MCF 10A (cell line): ENCODE measurements at regions of chr1 and their contacts with region 1.

Region 1: GRCh38 chr1:228664399-228664914 is 70.8 kb upstream of the RHOU start:
- DNase-seq: peak; percentile 96
- H3K4me3 Mint-ChIP-seq: no peak overlapping the region
- H3K27ac Mint-ChIP-seq: no peak overlapping the region
- H3K4me1 Mint-ChIP-seq: no peaks in the 10 kb centered on the region
- H3K27me3 Mint-ChIP-seq: no peaks in the 10 kb centered on the region
- CTCF ChIP-seq: peak; percentile 99

Region 2: DNA sequence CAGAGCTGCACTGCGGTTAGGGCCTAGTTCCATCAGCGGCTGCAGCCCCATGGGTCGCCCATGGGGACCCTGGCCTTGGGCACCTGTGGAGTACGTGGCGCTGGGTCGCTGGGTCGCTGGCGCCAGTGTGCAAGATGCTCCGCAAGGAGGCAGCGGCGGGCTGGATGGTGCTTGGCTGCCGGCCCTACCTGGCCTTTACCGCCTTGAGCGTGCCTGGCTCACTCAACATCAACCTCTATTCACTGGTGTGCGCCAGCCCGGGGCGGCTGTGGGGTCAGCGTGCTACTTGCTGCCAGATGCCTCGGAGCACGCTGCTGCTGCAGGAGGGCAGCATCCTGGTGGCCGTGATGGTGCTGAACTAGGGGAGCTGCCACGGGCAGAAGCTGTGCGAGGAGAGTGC is 14.3 kb before region 1 on chr1:
- CTCF ChIA-PET with region 1: interaction called, 40 read pairs
- POLR2A ChIA-PET with region 1: interaction called, 6 read pairs
- intact Hi-C with region 1: no loop called
- DNase-seq: no peak
- H3K4me3 Mint-ChIP-seq: no peak overlapping the region
- H3K27ac Mint-ChIP-seq: no peak overlapping the region
- H3K4me1 Mint-ChIP-seq: peaks cover 26% of the 10 kb centered on the region
- H3K27me3 Mint-ChIP-seq: no peaks in the 10 kb centered on the region
- CTCF ChIP-seq: no peak

Region 3: DNA sequence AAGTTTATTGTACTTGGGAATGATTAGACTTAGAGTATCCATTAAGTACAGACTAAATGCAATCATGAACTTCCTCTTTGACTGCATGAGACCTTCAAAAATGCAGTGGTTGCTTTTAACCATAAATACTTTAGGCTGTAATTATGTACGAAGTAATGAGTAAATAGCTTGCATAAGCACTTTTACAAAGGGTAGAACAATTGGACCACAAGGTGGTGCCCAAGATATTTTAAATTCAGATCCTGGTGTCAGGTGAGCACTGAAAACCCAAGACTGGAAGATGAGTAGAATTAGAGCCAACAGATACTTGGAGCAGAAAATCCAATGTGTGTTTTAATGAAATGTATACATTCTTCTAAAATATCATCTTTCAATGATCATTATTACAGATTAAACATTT is 27.5 kb after region 1 on chr1:
- CTCF ChIA-PET with region 1: interaction called, 16 read pairs
- POLR2A ChIA-PET with region 1: interaction called, 3 read pairs
- intact Hi-C with region 1: no loop called
- DNase-seq: peak; percentile 84
- H3K4me3 Mint-ChIP-seq: no peak overlapping the region
- H3K27ac Mint-ChIP-seq: no peak overlapping the region
- H3K4me1 Mint-ChIP-seq: peaks cover 18% of the 10 kb centered on the region
- H3K27me3 Mint-ChIP-seq: no peaks in the 10 kb centered on the region
- CTCF ChIP-seq: peak; percentile 85

Region 4: GRCh38 chr1:229156872-229157271 is 492.4 kb after region 1 on chr1:
- CTCF ChIA-PET with region 1: interaction called, 12 read pairs
- POLR2A ChIA-PET with region 1: no interaction called
- intact Hi-C with region 1: loop called (anchors 1 kb)
- DNase-seq: peak; percentile 54
- H3K4me3 Mint-ChIP-seq: no peak overlapping the region
- H3K27ac Mint-ChIP-seq: no peak overlapping the region
- H3K4me1 Mint-ChIP-seq: no peaks in the 10 kb centered on the region
- H3K27me3 Mint-ChIP-seq: no peaks in the 10 kb centered on the region
- CTCF ChIP-seq: peak; percentile 58

Region 5: GRCh38 chr1:229452956-229453801 is 788.7 kb after region 1 on chr1:
- CTCF ChIA-PET with region 1: interaction called, 19 read pairs
- POLR2A ChIA-PET with region 1: no interaction called
- intact Hi-C with region 1: no loop called
- DNase-seq: peak; percentile 51
- H3K4me3 Mint-ChIP-seq: no peak overlapping the region
- H3K27ac Mint-ChIP-seq: no peak overlapping the region
- H3K4me1 Mint-ChIP-seq: peaks cover 6% of the 10 kb centered on the region
- H3K27me3 Mint-ChIP-seq: no peaks in the 10 kb centered on the region
- CTCF ChIP-seq: peak; percentile 67

Region 6: DNA sequence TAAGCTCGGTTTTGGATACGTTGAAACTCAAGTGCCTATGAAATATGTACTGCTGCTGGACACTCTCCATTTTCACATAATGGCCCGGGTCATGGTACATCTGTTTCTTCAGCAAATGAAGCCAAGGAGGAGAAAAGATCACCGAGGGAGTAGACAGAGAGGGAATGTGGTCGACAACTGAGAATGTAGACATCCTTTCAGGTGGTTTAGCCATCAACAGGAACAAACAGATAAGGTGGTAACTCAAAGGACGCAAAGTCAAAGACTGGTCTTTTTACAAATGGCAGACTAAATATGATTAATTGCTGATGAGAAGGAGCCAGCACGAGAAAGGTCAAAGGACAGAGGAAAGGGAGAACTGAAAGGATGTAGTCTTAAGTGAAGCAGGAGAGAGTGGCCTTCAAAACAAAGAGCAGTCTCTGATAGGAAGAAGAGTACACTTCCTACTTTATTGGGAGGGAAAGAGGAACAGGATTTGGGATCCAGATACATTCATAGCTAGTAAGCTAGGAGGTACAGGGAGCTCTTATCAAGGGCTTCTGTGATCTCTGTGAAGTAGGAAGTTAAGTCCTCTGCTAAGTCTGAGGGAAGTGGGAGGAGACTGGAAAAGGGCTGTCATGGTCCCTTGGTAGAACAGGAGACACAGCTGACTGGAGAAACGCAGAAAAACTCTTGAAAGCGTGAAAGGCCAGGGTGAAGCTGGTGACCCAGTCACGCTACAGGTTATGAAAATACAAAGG is 815.4 kb after region 1 on chr1:
- CTCF ChIA-PET with region 1: interaction called, 23 read pairs
- POLR2A ChIA-PET with region 1: no interaction called
- intact Hi-C with region 1: loop called (anchors 1 kb)
- DNase-seq: no peak
- H3K4me3 Mint-ChIP-seq: no peak overlapping the region
- H3K27ac Mint-ChIP-seq: peak overlapping the region; percentile 0
- H3K4me1 Mint-ChIP-seq: no peaks in the 10 kb centered on the region
- H3K27me3 Mint-ChIP-seq: no peaks in the 10 kb centered on the region
- CTCF ChIP-seq: no peak